Stomach (tissue), 19 donors: ENCODE measurements at regions of chr7 and their contacts with region 1.

Region 1: GRCh38 chr7:75905785-75906604 is 9.0 kb upstream of the POR start:
- DNase-seq: peak; percentile 58 to 67
- H3K4me3 ChIP-seq: no peak overlapping the region
- H3K27ac ChIP-seq: peak overlapping the region in 4 of 5 donors; percentile 30 to 75 (median 58)
- H3K4me1 ChIP-seq: peaks cover 0 to 12% (median 3%) of the 10 kb centered on the region in 4 donors
- H3K27me3 ChIP-seq: no peaks in the 10 kb centered on the region
- CTCF ChIP-seq: no peak
- EP300 ChIP-seq: no peak
- POLR2A ChIP-seq: no peak

Region 2: DNA sequence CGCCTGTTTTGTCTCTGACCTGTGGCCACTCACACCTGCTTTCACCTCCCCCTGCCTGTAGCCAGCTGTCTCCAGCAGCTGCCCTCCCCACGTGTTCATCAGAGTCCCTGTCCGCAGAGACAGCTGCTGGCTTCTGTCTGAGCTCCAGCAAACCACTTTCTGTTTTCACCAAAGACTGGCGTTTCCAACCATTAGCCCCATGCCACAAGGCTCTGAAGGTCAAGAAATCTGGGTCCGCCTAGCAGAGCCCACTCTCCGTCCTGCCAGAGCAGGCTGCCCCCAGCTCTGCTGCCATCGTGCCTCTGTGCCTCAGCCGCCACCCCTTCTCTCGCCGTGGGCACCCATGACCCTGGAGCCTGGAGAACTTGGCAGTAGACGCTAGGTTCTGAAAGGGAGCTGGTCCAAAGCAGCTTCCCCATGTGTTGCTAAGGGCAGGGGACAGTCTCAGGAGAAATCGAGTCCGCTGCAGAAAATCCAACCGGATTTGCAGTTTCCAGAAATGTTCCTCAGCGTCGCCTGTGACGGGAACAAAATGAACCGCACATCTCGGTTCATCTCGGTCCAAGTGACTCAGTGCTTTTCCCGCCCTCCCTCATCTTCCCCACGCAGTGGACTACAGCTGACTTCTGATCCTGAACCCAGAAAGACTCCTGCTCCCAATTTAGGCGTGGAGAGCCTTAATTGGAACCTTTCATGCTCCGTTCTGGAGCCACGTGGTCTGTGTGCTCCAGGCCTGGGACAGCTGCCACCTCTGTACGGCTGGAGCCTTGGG is 60.4 kb after region 1 on chr7:
- intact Hi-C with region 1: loop called (anchors 10 kb)
- DNase-seq: peak in 1 of 2 donors; percentile 67
- H3K4me3 ChIP-seq: peak overlapping the region in 2 of 4 donors; percentile 18 to 20
- H3K27ac ChIP-seq: peak overlapping the region; percentile 37 to 91 (median 86)
- H3K4me1 ChIP-seq: peaks cover 26 to 66% (median 54%) of the 10 kb centered on the region in 4 donors
- H3K27me3 ChIP-seq: no peaks in the 10 kb centered on the region
- CTCF ChIP-seq: no peak
- EP300 ChIP-seq: peak; percentile 98
- POLR2A ChIP-seq: no peak